GM23248 (cell line): ENCODE measurements at regions of chr19 and their contacts with region 1.

Region 1: GRCh38 chr19:13784731-13785452 is 10.4 kb upstream of the ZSWIM4 start:
- DNase-seq: peak; percentile 88
- H3K4me3 ChIP-seq: no peak overlapping the region
- H3K27ac ChIP-seq: 0 out of 2 replicates have a peak overlapping the region, but pooled peaks have one; percentile 31
- H3K4me1 ChIP-seq: peaks cover 48% of the 10 kb centered on the region
- H3K27me3 ChIP-seq: no peaks in the 10 kb centered on the region

Region 2: GRCh38 chr19:13521066-13521465 is 263.8 kb before region 1 on chr19:
- in situ Hi-C with region 1: no loop called
- DNase-seq: peak; percentile 5
- H3K4me3 ChIP-seq: no peak overlapping the region
- H3K27ac ChIP-seq: no peak overlapping the region
- H3K4me1 ChIP-seq: no peaks in the 10 kb centered on the region
- H3K27me3 ChIP-seq: no peaks in the 10 kb centered on the region

Region 3: GRCh38 chr19:13861732-13862531 is 77.0 kb after region 1 on chr19:
- in situ Hi-C with region 1: loop called (anchors 10 kb)
- DNase-seq: peak; percentile 92
- H3K4me3 ChIP-seq: peak overlapping the region; percentile 71
- H3K27ac ChIP-seq: peak overlapping the region; percentile 97
- H3K4me1 ChIP-seq: peaks cover 8% of the 10 kb centered on the region
- H3K27me3 ChIP-seq: no peaks in the 10 kb centered on the region